Activated CD8-positive, alpha-beta T cell treated with anti-CD3 and anti-CD28 coated beads, Interleukin-2, amount 10 ng/mL, durations not matched to agents 7 days and 5 days (primary cell): ENCODE measurements at regions of chr17 and their contacts with region 1.

Region 1: GRCh38 chr17:49556223-49556971 is 19.3 kb upstream of the NXPH3 start:
- DNase-seq: peak; percentile 88
- ATAC-seq: peak; percentile 96
- H3K4me3 Mint-ChIP-seq: no peak overlapping the region
- H3K27ac Mint-ChIP-seq: no peak overlapping the region
- H3K4me1 Mint-ChIP-seq: peaks cover 11% of the 10 kb centered on the region
- H3K27me3 Mint-ChIP-seq: peaks cover 15% of the 10 kb centered on the region

Region 2: DNA sequence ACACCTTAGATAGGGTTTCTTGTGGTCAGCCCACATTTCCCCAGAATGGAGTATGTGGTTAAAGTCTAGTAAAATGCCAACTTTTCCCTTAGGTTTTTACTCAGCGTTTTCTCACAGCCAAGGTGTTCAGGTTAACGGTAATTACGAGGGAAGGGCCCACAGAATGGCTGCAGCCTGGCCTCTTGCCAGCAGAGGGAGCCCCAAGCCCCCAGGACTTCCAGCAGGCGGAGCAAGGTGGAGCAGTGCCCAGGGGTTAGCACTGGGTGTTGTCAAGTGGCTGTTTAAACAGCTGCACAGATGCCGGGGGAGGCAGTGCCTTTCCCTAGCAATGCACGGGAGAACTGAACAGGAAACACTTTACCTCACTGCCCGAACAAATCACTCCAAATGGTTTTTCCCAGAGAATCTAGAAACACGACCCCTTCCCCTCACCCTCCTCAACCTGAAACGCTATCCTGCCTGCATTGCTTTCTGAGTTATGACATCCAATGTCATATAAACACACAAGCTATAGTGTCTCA is 148.4 kb before region 1 on chr17:
- CTCF ChIA-PET with region 1: interaction called, 103 read pairs
- POLR2A ChIA-PET with region 1: no interaction called
- DNase-seq: peak; percentile 90
- ATAC-seq: peak; percentile 95
- H3K4me3 Mint-ChIP-seq: no peak overlapping the region
- H3K27ac Mint-ChIP-seq: peak overlapping the region; percentile 63
- H3K4me1 Mint-ChIP-seq: peaks cover 57% of the 10 kb centered on the region
- H3K27me3 Mint-ChIP-seq: no peaks in the 10 kb centered on the region

Region 3: DNA sequence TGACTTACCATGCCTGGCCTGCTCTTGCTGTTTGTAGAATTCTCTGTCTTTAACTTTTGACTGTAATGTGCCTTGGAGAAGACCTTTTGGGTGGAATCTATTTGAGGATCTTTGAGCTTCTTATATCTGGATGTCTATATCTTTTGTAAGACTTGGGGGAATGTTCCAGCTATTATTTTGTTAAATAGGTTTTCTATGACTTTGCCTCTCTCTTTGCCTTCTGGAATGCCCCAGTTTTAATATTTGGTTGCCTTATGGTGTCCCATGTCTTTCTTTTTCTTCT is 131.5 kb before region 1 on chr17:
- CTCF ChIA-PET with region 1: interaction called, 11 read pairs
- POLR2A ChIA-PET with region 1: no interaction called
- DNase-seq: no peak
- ATAC-seq: no peak
- H3K4me3 Mint-ChIP-seq: no peak overlapping the region
- H3K27ac Mint-ChIP-seq: no peak overlapping the region
- H3K4me1 Mint-ChIP-seq: no peaks in the 10 kb centered on the region
- H3K27me3 Mint-ChIP-seq: peaks cover 20% of the 10 kb centered on the region

Region 4: DNA sequence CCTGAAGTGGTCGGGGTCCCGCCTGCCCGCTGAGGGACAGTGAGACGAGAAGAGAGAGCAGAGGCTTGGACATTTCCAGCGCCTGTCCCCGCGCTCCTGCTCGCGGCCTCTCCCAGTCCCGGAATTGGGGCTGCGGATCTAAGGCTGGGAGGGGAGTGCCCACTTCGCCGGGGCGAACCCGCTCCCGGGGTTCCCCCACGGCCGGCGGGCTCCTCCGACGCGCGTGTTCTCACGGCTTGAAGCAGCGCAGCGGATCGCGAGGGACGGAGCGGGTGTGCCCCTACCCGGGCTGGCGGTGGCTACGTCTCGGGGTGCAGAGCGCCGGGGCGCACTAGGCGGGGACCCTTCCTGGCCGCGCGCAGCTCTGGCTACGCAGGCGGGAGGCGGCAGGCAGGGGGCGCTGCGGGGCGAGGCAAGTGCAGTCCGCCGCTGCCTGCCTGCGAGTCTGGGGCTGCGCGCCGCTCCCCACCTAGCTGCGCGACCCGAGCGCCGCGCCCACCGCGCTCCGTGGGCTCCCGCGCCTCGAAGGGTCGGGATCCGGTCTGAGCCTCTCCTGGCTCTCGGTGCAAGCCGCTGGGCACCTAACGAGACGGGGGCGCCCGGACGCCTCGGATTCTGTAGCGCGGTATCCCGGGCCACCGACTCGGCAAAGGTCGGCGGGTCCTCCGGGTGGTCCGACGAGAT is 60.1 kb before region 1 on chr17:
- CTCF ChIA-PET with region 1: interaction called, 36 read pairs
- POLR2A ChIA-PET with region 1: no interaction called
- DNase-seq: peak; percentile 84
- ATAC-seq: peak; percentile 83
- H3K4me3 Mint-ChIP-seq: peak overlapping the region; percentile 60
- H3K27ac Mint-ChIP-seq: no peak overlapping the region
- H3K4me1 Mint-ChIP-seq: peaks cover 28% of the 10 kb centered on the region
- H3K27me3 Mint-ChIP-seq: peaks cover 73% of the 10 kb centered on the region

Region 5: GRCh38 chr17:49687878-49688491 is 131.6 kb after region 1 on chr17:
- CTCF ChIA-PET with region 1: interaction called, 12 read pairs
- POLR2A ChIA-PET with region 1: no interaction called
- DNase-seq: peak; percentile 46
- ATAC-seq: peak; percentile 77
- H3K4me3 Mint-ChIP-seq: peak overlapping the region; percentile 58
- H3K27ac Mint-ChIP-seq: peak overlapping the region; percentile 92
- H3K4me1 Mint-ChIP-seq: peaks cover 34% of the 10 kb centered on the region
- H3K27me3 Mint-ChIP-seq: no peaks in the 10 kb centered on the region

Region 6: GRCh38 chr17:49707608-49708514 is 151.5 kb after region 1 on chr17 and contains the start of gene SLC35B1:
- CTCF ChIA-PET with region 1: interaction called, 60 read pairs
- POLR2A ChIA-PET with region 1: no interaction called
- DNase-seq: peak; percentile 99
- ATAC-seq: peak; percentile 99
- H3K4me3 Mint-ChIP-seq: peak within 1 kb of the TSS; percentile 94
- H3K27ac Mint-ChIP-seq: peak within 1 kb of the TSS; percentile 97
- H3K4me1 Mint-ChIP-seq: peaks cover 42% of the 10 kb centered on the region
- H3K27me3 Mint-ChIP-seq: no peaks in the 10 kb centered on the region
- total RNA-seq, gene SLC35B1: 50.7 to 62.6 TPM

Region 7: DNA sequence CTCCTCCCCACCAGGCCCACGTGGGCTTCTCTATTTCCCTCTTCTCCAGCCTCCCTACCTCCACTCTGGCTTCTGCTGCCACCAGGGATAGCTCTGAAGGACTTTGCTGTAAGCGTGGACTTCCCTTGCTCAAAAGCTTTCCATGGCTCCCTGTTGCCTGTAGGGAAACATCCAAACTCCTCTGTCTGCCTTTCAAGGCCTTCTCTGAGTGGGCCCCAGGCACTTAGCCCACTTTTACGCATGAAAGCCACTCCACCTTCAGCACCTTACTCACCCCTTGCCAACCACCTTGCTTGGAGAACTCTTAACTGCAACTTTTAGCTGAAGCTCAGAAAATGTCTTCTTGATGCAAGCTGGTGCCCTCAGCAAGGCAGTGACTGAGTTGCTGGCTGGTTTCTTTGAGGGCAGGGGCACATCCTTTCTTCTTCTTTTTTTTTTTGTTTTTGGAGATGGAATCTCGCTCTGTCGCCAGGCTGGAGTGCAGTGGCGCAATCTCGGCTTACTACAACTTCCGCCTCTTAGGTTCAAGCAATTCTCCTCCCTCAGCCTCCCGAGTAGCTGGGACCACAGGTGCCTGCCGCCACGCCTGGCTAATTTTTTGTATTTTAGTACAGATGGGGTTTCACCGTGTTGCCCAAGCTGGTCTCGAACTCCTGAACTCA is 360.6 kb after region 1 on chr17:
- CTCF ChIA-PET with region 1: no interaction called
- POLR2A ChIA-PET with region 1: no interaction called
- DNase-seq: no peak
- ATAC-seq: no peak
- H3K4me3 Mint-ChIP-seq: no peak overlapping the region
- H3K27ac Mint-ChIP-seq: no peak overlapping the region
- H3K4me1 Mint-ChIP-seq: no peaks in the 10 kb centered on the region
- H3K27me3 Mint-ChIP-seq: peaks cover 30% of the 10 kb centered on the region